ENCODE measurements at regions of chr12 and their contacts with region 1.

Region 1: GRCh38 chr12:51424662-51425438 is at the start of gene SLC4A8:
- DNase-seq: peak; percentile 92
- total RNA-seq, gene SLC4A8: 0.79 to 1.4 TPM

Region 2: GRCh38 chr12:51293696-51294095 is 131.2 kb before region 1 on chr12:
- intact Hi-C with region 1: no loop called
- DNase-seq: no peak

Region 3: DNA sequence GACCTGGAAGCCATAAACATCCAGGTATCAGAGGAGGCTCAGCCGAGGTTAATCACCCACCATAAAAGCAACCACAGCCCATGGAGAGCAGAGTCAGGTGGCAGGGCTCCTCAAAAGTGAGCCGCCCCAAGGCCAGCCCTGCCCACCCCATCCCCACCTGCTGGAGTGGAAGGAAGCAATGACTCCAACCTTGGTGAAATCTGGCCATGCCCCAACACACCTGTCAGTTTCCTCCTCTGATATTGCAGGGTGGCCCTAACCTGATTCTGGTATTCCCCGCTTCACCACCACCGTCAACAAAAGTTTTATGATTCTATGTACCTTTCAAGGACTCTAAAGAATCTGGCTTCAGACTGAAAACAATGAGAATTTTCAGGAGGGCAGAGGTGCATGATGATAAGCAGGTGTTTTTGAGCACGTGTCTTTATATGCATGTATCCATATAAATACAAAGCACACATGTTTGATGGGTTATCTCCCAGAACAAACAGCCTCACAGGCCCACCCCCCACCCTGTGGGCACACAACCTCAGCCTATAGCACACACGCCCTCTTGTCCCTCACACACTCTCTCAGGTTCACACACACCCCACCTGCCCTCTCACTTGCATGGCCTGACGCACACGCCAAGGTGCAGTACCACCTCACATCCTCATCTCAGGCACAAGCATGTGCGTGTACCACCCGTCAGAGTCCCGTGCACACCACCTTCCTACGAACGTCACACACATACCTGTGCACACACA is 1488.4 kb after region 1 on chr12:
- intact Hi-C with region 1: loop called in 1 of 2 experiments (anchors 5 kb)
- DNase-seq: no peak